Heart right ventricle (tissue), 16 donors: ENCODE measurements at regions of chr13 and their contacts with region 1.

Region 1: DNA sequence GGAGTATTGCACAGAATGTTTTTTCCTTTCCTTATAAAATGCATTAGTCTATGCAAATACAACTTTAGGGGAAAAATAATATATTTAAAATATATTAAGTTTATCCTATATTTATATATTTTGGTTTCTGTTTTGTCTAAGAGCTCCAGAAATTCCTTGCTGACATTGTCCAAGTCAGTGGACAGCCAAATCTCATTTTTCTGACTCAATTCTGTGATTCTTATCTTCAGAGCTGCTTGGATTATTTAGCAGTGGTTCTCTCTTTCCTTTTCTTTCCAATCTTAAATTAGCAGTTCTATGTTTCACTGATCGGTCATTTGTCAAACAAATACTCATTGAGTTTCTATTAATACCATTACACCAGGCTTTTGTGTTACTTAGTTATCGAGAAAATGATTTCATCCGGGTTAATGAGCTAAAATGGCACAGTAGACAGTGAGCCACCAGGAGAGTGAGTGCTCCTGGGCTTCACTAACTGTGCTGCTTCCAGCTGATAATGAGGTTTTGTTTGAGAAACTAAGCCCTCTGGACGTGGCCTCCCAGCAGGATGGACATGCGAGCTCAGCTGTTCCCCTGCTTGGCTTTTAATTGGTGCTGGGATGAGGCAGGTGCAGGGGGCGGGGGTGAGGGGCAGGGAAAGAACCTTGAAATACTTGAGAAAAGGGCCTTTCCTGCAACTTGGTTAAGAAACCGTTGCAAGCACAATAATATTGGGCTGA is 44.0 kb downstream of the ATP11A start:
- DNase-seq: no peak
- ATAC-seq: no peak
- H3K4me3 ChIP-seq: no peak overlapping the region
- H3K27ac ChIP-seq: peak overlapping the region in 6 of 10 donors; percentile 24 to 65 (median 49)
- H3K4me1 ChIP-seq: peaks cover 7 to 63% (median 35%) of the 10 kb centered on the region in 9 donors
- H3K27me3 ChIP-seq: no peaks in the 10 kb centered on the region
- CTCF ChIP-seq: no peak

Region 2: GRCh38 chr13:112771877-112772538 is 38.2 kb after region 1 on chr13:
- intact Hi-C with region 1: loop called in 1 of 10 experiments (anchors 5 kb)
- DNase-seq: no peak
- ATAC-seq: no peak
- H3K4me3 ChIP-seq: no peak overlapping the region
- H3K27ac ChIP-seq: peak overlapping the region in 9 of 10 donors; percentile 22 to 77 (median 69)
- H3K4me1 ChIP-seq: peaks cover 15 to 81% (median 42%) of the 10 kb centered on the region in 9 donors
- H3K27me3 ChIP-seq: no peaks in the 10 kb centered on the region
- CTCF ChIP-seq: no peak